ENCODE measurements at regions of chr10 and their contacts with region 1.

Region 1: GRCh38 chr10:79316671-79317431 is 30.4 kb upstream of the PPIF start:
- DNase-seq: no peak
- H3K4me3 Mint-ChIP-seq: peak overlapping the region; percentile 52
- H3K27ac Mint-ChIP-seq: peak overlapping the region; percentile 81
- H3K4me1 Mint-ChIP-seq: peaks cover 62% of the 10 kb centered on the region
- H3K27me3 Mint-ChIP-seq: no peaks in the 10 kb centered on the region

Region 2: DNA sequence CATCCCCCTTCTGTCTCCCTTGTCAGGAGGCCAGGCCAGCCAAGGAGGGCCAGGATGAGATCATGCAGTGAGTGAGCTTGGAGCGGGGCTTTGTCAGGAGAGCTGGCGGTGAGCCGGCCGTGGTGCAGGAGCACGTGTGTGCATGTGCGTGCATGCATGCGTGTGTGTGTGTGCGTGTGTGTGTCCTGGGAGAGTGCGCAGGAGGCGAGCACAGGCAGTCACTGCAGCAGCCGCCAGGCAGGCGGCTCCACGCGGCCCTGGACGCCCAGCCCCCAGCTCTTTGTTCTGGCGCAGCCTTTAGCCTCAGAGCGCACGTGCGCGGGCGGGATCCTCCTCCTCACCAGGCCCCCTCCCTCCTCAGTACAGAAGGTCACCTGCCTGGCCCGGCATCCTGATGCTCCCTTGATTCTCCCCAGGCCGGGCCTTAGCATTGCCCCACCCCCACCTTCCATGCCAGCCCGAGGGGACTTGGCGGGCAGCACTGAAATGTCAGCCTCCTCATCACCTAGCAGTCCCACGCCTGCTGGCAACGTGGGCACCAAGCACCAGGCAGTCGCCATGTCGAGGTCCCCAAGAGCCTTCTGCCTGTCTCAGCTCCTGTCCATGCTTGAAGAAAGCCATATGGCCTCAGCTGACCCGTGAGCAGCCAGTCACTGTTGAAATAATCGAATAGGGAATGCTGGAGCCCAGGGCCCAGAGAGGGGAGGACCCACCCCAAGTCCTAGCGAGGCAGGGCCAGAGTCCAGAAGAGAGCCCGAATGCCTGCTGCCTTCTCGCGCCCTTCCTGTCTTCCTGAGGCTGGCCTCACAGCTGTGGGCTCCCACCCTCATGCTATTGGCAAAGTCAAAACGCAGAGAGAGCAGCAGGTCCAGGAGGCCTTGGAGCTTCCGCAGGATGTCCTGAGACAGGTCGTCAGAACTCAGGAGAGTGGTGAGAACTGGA is 95.5 kb before region 1 on chr10:
- intact Hi-C with region 1: no loop called
- DNase-seq: no peak
- H3K4me3 Mint-ChIP-seq: no peak overlapping the region
- H3K27ac Mint-ChIP-seq: no peak overlapping the region
- H3K4me1 Mint-ChIP-seq: no peaks in the 10 kb centered on the region
- H3K27me3 Mint-ChIP-seq: no peaks in the 10 kb centered on the region

Region 3: GRCh38 chr10:79249186-79250121 is 67.4 kb before region 1 on chr10:
- intact Hi-C with region 1: no loop called
- DNase-seq: no peak
- H3K4me3 Mint-ChIP-seq: peak overlapping the region; percentile 43
- H3K27ac Mint-ChIP-seq: peak overlapping the region; percentile 81
- H3K4me1 Mint-ChIP-seq: peaks cover 62% of the 10 kb centered on the region
- H3K27me3 Mint-ChIP-seq: no peaks in the 10 kb centered on the region

Region 4: GRCh38 chr10:79298403-79299244 is 18.2 kb before region 1 on chr10:
- intact Hi-C with region 1: loop called (anchors 2 kb)
- DNase-seq: no peak
- H3K4me3 Mint-ChIP-seq: no peak overlapping the region
- H3K27ac Mint-ChIP-seq: peak overlapping the region; percentile 22
- H3K4me1 Mint-ChIP-seq: peaks cover 24% of the 10 kb centered on the region
- H3K27me3 Mint-ChIP-seq: no peaks in the 10 kb centered on the region

Region 5: DNA sequence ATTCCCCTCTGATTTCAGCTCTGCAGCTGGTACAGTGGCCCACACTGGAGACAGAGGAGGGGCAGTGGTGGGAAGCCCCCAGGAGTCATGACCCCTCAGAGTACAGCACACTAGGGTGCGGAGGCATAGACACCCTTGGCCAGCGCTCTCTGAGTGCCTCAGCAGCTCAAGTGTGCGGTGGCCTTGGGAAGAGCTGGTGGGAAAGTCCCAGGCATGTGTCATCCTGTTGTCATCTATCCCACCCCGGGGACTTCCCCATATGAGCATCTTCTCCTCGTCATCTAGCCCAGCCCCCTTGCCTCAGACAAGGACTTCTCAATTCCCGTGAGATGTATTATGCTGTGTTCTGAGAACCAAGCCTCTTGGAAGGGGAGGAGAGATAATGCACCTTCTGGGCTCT is 14.9 kb after region 1 on chr10:
- intact Hi-C with region 1: loop called (anchors 1 kb)
- DNase-seq: peak; percentile 71
- H3K4me3 Mint-ChIP-seq: peak overlapping the region; percentile 11
- H3K27ac Mint-ChIP-seq: peak overlapping the region; percentile 90
- H3K4me1 Mint-ChIP-seq: peaks cover 37% of the 10 kb centered on the region
- H3K27me3 Mint-ChIP-seq: no peaks in the 10 kb centered on the region

Measured in activated T-helper 2 cell treated with anti-CD3 and anti-CD28 coated beads, Interferon-gamma antibody, Interleukin-2, Interleukin-4, amounts not matched to agents 10 μg/mL and 5 μg/mL and 100 μg/mL, durations not matched to agents 14 hours and 24 hours and 36 hours (primary cell).